Activated CD4-positive, alpha-beta memory T cell treated with anti-CD3 and anti-CD28 coated beads for 36 hours (primary cell): ENCODE measurements at regions of chr7 and their contacts with region 1.

Region 1: DNA sequence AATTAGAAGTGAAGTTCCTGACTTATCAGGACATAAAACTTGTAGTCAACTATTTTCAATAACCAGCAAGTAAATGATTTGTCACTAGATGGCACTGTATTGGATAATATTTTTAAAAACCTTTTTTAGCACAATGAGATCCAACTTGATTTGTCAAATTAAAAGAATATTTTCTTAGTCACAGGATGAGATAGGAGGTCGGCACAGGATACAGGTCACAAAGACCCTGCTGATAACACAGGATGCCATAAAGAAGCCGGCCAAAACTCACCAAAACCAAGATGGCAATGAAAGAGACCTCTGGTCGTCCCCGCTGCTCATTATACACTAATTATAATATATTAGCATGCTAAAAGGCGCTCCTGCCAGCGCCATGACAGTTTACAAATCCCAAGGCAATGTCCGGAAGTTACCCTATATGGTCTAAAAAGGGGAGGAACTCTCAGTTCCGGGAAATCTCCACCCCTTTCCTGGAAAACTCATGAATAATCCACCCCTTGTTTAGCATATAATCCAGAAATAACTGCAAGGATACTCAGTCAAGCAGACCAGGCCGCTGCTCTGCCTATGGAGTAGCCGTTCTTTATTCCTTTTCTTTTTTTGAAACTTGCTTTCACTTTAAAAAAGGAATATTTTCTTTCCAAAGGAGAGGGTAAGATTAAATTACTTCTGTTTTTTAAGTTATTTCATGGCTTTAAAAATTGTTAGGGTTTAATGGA is 255.7 kb upstream of the MKLN1 start:
- DNase-seq: peak; percentile 31
- H3K4me3 Mint-ChIP-seq: no peak overlapping the region
- H3K27ac Mint-ChIP-seq: peak overlapping the region; percentile 70
- H3K4me1 Mint-ChIP-seq: peaks cover 83% of the 10 kb centered on the region
- H3K27me3 Mint-ChIP-seq: no peaks in the 10 kb centered on the region

Region 2: GRCh38 chr7:130695840-130696239 is 376.1 kb before region 1 on chr7:
- CTCF ChIA-PET with region 1: no interaction called
- POLR2A ChIA-PET with region 1: no interaction called
- intact Hi-C with region 1: no loop called
- DNase-seq: no peak
- H3K4me3 Mint-ChIP-seq: no peak overlapping the region
- H3K27ac Mint-ChIP-seq: no peak overlapping the region
- H3K4me1 Mint-ChIP-seq: no peaks in the 10 kb centered on the region
- H3K27me3 Mint-ChIP-seq: peaks cover 3% of the 10 kb centered on the region

Region 3: DNA sequence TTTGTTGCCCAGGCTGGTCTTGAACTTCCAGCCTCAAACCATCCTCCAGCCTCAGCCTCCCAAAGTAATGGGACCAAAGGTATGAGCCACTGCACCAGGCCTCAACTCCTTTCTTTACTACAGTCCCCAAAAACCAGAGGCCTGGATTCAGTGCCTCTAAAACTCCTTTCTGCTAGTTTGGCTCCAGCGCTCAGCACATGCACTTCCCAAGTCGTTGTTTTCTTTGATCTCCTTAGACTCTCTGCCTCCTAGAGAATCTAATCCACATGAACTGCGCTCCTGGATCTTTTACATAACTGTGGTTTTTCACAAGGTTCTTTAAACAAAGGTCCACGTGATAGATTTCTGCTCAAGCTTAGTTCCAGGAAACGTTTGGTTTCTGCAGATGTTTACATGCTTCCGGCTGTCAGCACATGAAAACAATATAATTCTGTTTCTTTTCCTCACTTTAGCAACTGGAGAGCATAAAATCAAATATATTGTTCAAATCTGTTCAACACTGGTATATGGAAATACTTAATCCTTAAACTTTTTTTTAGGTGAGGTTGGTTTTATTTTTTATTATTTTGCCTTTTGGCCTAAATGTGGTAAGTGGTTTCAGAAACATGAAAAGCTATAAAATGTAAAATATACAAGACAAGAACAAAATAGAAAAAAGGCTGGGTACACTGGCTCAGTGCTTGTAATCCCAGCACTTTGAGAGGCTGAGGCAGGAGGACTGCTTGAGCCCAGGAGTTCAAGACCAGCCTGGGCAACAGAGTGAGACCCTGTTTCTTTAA is 14.7 kb before region 1 on chr7:
- CTCF ChIA-PET with region 1: interaction called, 28 read pairs
- POLR2A ChIA-PET with region 1: interaction called, 3 read pairs
- intact Hi-C with region 1: loop called (anchors 1 kb)
- DNase-seq: no peak
- H3K4me3 Mint-ChIP-seq: peak overlapping the region; percentile 30
- H3K27ac Mint-ChIP-seq: peak overlapping the region; percentile 95
- H3K4me1 Mint-ChIP-seq: peaks cover 66% of the 10 kb centered on the region
- H3K27me3 Mint-ChIP-seq: no peaks in the 10 kb centered on the region

Region 4: DNA sequence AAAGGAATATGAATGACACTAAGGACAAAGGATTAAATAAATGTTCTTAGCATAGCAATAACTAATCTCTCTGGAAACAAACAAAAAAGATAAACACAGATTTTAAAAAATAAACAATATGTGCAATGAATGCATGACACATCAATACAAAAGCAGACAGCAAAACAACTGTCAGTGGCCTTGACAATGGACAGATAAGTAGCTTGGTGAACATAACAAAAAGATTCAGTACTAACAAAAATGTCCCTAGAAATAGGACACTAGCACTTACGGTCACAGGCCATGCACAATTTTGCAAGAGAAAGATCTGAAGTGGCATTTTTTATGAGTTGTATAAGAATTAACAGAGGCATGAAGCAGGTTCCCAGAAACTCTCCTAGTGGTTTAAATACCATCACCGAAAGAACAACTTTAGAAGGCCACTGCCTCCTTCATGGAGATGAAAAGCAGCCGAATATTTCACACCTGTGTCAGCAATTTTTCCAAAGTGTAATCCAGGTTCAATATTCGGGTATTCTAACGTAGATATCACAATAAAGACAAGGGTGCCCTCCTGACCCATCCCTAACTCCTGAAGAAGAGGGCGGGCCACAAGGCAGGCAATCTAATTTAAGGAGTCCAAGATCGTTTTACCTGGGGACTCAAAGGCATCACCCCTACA is 24.5 kb after region 1 on chr7:
- CTCF ChIA-PET with region 1: interaction called, 8 read pairs
- POLR2A ChIA-PET with region 1: interaction called, 4 read pairs
- intact Hi-C with region 1: loop called (anchors 2 kb)
- DNase-seq: no peak
- H3K4me3 Mint-ChIP-seq: no peak overlapping the region
- H3K27ac Mint-ChIP-seq: no peak overlapping the region
- H3K4me1 Mint-ChIP-seq: peaks cover 81% of the 10 kb centered on the region
- H3K27me3 Mint-ChIP-seq: no peaks in the 10 kb centered on the region

Region 5: DNA sequence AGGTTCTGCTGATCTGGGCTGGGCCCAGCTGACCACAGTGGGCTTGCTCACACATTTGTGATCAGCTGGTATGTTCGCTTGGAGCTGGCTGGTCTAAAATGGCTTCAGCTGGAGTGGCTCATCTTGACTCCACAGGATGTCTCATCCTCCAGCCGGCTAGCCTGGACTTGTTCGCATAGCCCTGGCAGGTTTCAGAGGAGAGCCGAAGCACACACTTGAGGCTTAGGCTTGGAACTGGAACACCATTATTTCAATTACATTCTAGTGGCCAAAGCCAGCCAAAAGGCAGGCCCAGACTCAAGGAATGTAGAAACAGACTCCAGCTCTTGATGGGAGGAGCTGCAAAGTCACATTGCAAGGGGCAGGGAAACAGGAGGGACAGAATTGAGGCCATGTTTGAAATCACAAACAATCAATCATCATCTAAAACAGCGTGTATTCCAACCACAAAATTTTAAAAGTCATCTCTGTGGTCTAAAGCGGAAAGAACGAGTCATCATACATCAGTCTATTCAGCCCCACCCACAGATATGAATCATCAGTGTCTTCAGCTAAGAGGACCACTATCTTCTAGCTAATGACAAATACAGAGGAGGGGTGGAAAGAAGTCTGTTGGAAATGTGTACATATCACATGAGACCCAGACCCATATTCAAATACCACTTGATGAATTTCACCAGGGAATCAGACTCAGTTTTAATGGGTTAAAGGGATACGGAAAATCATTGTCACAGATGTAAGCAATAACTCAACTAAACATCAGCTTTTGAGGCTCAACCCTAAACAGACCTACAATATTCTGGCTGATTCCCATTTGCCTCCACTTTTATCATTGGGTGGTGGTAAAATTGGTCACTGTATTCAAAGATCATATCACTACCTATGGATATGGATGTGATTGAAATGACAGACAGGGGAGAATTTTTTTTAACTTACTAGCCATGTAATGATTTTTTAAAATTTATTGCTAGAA is 116.7 kb after region 1 on chr7:
- CTCF ChIA-PET with region 1: interaction called, 3 read pairs
- POLR2A ChIA-PET with region 1: no interaction called
- intact Hi-C with region 1: loop called (anchors 2 kb)
- DNase-seq: peak; percentile 68
- H3K4me3 Mint-ChIP-seq: peak overlapping the region; percentile 45
- H3K27ac Mint-ChIP-seq: peak overlapping the region; percentile 90
- H3K4me1 Mint-ChIP-seq: peaks cover 54% of the 10 kb centered on the region
- H3K27me3 Mint-ChIP-seq: no peaks in the 10 kb centered on the region

Region 6: DNA sequence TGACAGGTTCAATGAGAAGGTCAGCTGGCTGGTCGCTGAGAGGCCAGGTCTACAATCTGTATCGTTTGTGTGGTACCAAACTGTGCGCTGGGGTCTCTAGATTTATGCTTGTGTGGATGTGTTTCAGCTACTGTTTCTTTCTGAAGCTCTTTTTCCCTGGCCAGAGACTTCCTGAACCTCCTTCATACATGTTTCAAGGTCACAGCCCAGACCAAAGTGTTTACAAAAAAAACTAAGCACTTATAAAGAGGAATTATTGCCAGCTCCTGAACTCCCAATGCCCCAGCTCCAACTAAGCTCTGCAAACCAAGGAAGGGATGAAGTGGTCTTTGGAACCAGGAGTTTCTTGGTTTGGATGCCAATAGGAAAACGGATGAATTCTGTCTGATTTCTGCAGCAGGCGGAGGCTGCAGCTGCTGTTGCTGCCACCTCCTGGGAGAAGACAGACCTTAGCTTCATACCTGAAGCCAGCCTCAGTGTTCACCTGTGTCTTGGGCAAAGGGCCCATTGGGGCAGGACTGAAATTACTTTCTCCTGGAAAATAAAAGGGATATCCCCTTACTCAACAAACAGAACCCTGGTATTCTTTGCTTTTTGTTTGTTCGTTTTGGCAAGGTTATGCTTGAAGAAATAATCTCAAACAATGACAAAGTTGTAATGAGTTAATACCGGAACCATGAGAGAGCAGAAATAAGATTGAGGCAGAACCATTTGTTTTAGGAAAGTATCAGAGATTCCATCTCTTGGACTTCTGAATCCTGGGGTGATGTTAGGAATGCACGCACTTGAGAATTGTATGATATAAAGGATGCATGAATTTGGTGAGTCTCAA is 231.1 kb after region 1 on chr7:
- CTCF ChIA-PET with region 1: interaction called, 10 read pairs
- POLR2A ChIA-PET with region 1: no interaction called
- intact Hi-C with region 1: loop called (anchors 1 kb)
- DNase-seq: peak; percentile 32
- H3K4me3 Mint-ChIP-seq: no peak overlapping the region
- H3K27ac Mint-ChIP-seq: no peak overlapping the region
- H3K4me1 Mint-ChIP-seq: peaks cover 6% of the 10 kb centered on the region
- H3K27me3 Mint-ChIP-seq: no peaks in the 10 kb centered on the region

Region 7: DNA sequence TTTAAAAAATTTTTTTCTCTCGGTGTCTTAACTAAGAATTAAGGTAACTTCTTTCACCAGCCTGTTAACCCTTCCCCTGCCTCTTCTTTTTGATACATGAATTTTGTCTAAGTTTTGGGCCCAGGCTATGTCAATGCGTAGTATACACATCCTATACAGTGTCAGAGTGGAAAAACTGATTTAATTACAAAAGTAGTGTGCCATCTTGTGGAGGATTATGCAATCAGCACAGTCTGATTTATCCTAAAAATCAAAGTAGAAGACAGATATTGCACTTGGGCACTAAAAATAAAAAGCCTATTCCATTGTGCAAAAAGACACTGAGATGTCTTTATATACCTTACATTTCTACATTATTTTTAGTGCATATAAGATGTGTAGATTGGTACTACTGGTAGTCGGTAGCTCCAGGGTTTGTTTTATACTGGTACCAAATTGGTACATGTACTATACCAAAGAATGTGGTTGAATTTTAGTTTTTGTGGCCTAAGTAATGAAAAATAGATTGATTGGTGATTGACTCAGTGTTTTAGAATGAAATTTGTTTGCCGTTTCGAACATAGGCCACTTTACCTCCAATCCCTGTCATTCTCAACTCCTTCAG is 352.4 kb after region 1 on chr7:
- CTCF ChIA-PET with region 1: interaction called, 7 read pairs
- POLR2A ChIA-PET with region 1: no interaction called
- intact Hi-C with region 1: loop called (anchors 2 kb)
- DNase-seq: no peak
- H3K4me3 Mint-ChIP-seq: no peak overlapping the region
- H3K27ac Mint-ChIP-seq: no peak overlapping the region
- H3K4me1 Mint-ChIP-seq: peaks cover 6% of the 10 kb centered on the region
- H3K27me3 Mint-ChIP-seq: no peaks in the 10 kb centered on the region

Region 8: DNA sequence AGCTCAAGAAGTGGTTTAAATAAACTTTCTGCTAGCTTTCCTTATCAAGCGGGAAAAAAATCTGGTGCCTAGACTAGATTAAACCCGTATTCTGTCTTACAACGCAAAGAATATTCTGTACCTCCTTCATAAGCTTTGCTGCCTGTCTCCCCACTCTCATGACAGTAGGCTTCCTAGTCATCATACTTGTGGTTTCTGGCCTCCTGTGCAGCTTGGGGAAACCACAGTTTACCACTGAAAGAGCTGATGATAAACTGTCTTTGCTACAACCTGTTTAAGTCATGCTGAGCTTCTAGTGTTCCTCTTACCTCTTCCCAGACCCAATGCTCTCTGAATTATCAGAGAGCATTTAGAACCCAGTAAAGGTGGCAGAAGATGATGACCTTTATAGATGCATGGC is 429.5 kb after region 1 on chr7:
- CTCF ChIA-PET with region 1: interaction called, 3 read pairs
- POLR2A ChIA-PET with region 1: no interaction called
- intact Hi-C with region 1: loop called (anchors 5 kb)
- DNase-seq: peak; percentile 79
- H3K4me3 Mint-ChIP-seq: no peak overlapping the region
- H3K27ac Mint-ChIP-seq: peak overlapping the region; percentile 60
- H3K4me1 Mint-ChIP-seq: peaks cover 30% of the 10 kb centered on the region
- H3K27me3 Mint-ChIP-seq: no peaks in the 10 kb centered on the region